Naive thymus-derived CD4-positive, alpha-beta T cell (primary cell): ENCODE measurements at regions of chr19 and their contacts with region 1.

Region 1: GRCh38 chr19:38387550-38388348 is at the start of gene GGN:
- DNase-seq: peak; percentile 60 to 83 (median 72)
- ATAC-seq: peak; percentile 83
- H3K4me3 ChIP-seq: peak within 1 kb of the TSS; percentile 74
- H3K4me3 Mint-ChIP-seq: peak within 1 kb of the TSS; percentile 81 to 95 (median 91)
- H3K27ac ChIP-seq: no peak within 1 kb of the TSS
- H3K27ac Mint-ChIP-seq: peak within 1 kb of the TSS in 8 of 9 donors; percentile 43 to 95 (median 84)
- H3K4me1 ChIP-seq: peaks cover 13 to 34% of the 10 kb centered on the region in 2 donors
- H3K4me1 Mint-ChIP-seq: peaks cover 5 to 26% (median 21%) of the 10 kb centered on the region in 7 donors
- H3K27me3 ChIP-seq: no peaks in the 10 kb centered on the region
- H3K27me3 Mint-ChIP-seq: peaks cover 6 to 41% (median 30%) of the 10 kb centered on the region in 5 donors
- total RNA-seq, gene GGN: 0.29 to 0.60 (median 0.39) TPM in 3 of 5 experiments, not detected in the others

Region 2: DNA sequence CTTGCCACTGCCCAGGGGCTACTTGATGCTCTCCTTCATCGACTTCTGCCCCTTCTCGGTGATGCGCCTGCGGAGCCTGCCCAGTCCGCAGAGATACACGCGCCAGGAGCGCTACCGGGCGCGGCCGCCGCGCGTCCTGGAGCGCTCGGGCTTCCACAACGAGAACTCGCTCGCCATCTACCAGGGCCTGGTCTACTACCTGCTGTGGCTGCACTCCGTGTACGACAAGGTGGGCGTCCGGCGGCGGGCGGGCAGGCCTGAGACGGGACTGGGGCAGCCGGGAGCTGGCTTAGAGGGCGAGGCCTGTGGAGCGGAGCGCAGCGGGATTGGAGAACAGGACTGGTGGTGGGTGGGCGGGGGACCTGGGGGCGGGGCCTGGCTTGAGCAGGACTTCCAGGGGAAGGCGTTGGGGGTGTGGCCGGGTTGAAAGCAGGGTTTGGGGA is 26.1 kb before region 1 on chr19:
- CTCF ChIA-PET with region 1: no interaction called
- POLR2A ChIA-PET with region 1: no interaction called
- intact Hi-C with region 1: loop called in 1 of 2 experiments (anchors 1 kb)
- DNase-seq: peak in 8 of 9 donors; percentile 17 to 80 (median 34)
- ATAC-seq: peak; percentile 83
- H3K4me3 ChIP-seq: peak overlapping the region; percentile 55
- H3K4me3 Mint-ChIP-seq: peak overlapping the region; percentile 62 to 94 (median 83)
- H3K27ac ChIP-seq: no peak overlapping the region
- H3K27ac Mint-ChIP-seq: no peak overlapping the region
- H3K4me1 ChIP-seq: peaks cover 0 to 6% of the 10 kb centered on the region in 2 donors
- H3K4me1 Mint-ChIP-seq: peaks cover 0 to 21% (median 15%) of the 10 kb centered on the region in 7 donors
- H3K27me3 ChIP-seq: no peaks in the 10 kb centered on the region
- H3K27me3 Mint-ChIP-seq: peaks cover 0 to 38% (median 6%) of the 10 kb centered on the region in 5 donors

Region 3: DNA sequence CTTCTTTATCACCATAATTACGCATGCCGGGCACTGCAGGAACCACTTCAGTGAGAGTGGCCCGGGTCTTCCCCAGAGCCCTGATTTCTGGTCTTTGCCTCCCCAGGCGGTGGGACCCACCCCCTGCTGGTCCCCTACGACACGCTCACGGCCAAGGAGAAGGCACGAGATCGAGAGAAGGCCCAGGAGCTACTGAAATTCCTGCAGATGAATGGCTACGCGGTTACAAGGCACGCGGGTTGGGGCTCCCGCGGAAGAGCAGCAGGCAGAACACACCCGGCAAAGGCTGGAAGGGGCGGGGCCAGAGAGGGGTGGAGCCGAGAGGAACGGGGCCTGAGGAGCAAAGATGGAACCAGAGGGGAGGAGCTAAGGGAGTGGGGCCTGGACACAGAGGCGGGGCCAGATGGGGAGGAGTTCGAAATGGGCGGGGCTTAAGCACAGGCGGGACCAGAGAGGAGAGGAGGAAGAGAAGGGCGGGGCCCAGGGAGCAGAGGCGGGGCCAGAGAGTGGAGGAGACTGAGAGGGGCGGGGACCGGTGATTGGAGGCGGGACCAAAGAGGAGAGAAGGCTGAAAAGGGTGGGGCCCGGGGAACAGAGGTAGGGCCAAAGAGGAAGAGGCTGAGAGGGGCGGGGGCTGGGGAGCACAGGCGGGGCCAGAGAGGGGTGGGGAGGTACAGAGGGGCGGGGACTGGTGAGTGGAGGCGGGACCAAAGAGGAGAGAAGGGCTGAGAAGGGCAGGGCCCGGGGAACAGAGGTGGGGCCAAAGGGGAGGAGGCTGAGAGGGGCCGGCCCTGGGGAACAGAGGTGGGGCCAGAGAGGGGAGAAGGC is 119.2 kb after region 1 on chr19:
- CTCF ChIA-PET with region 1: no interaction called
- POLR2A ChIA-PET with region 1: no interaction called
- intact Hi-C with region 1: loop called in 1 of 2 experiments (anchors 2 kb)
- DNase-seq: peak; percentile 44 to 91 (median 82)
- ATAC-seq: peak; percentile 95
- H3K4me3 ChIP-seq: no peak overlapping the region
- H3K4me3 Mint-ChIP-seq: peak overlapping the region in 8 of 10 donors; percentile 12 to 56 (median 33)
- H3K27ac ChIP-seq: no peak overlapping the region
- H3K27ac Mint-ChIP-seq: peak overlapping the region in 1 of 9 donors; percentile 14
- H3K4me1 ChIP-seq: peaks cover 0 to 6% of the 10 kb centered on the region in 2 donors
- H3K4me1 Mint-ChIP-seq: peaks cover 0 to 10% (median 5%) of the 10 kb centered on the region in 7 donors
- H3K27me3 ChIP-seq: no peaks in the 10 kb centered on the region
- H3K27me3 Mint-ChIP-seq: peaks cover 0 to 10% (median 4%) of the 10 kb centered on the region in 5 donors